Endothelial cell of umbilical vein (primary cell): ENCODE measurements at regions of chr17 and their contacts with region 1.

Region 1: DNA sequence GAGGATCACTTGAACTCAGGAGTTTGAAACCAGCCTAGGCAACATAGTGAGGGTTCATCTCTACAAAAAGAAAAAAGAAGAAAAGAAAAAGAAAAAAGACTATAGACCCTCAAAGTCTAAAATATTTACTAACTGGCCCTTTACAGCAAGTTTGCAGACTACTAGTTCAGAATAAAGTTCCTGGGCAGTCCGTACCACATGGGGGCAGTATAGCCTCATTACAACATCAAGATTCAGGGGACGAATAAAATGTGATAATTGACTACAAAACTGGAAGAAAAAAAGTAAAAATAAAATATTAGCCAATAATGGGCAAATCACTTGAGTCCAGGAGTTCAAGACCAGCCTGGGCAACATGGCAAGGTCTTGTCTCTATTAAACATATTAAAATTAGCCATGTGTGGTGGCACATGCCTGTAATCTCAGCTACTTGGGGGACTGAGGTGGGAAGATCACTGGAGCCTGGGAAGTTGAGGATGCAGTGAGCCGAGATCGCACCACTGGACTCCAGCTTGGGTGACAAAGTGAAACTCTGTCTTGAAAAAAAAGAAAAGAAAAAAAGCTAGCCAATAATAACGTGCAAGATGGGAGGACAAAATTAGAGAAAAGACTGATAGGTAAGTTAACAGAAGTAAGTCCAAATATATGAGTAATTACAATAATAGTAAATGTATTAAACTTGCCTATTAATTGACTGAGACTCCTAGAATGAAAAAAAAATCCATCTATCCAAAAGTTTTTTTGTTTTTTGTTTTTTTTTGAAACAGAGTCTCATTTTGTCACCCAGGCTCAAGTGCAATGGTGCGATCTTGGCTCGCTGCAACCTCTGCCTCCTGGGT is 129.4 kb upstream of the SEC14L1 start:
- DNase-seq: peak; percentile 53
- H3K4me3 ChIP-seq: no peak overlapping the region
- H3K27ac ChIP-seq: no peak overlapping the region
- H3K4me1 ChIP-seq: no peaks in the 10 kb centered on the region
- H3K27me3 ChIP-seq: peaks cover 3 to 6% of the 10 kb centered on the region in 2 experiments
- CTCF ChIP-seq: peak; percentile 50 to 56
- POLR2A ChIP-seq: no peak

Region 2: GRCh38 chr17:77068915-77069314 is 57.5 kb after region 1 on chr17:
- CTCF ChIA-PET with region 1: interaction called, 14 read pairs
- POLR2A ChIA-PET with region 1: interaction called, 3 read pairs
- dilution Hi-C with region 1: no loop called
- intact Hi-C with region 1: loop called (anchors 2 kb)
- DNase-seq: no peak
- H3K4me3 ChIP-seq: no peak overlapping the region
- H3K27ac ChIP-seq: no peak overlapping the region
- H3K4me1 ChIP-seq: no peaks in the 10 kb centered on the region
- H3K27me3 ChIP-seq: peaks cover 9% of the 10 kb centered on the region in 2 experiments
- CTCF ChIP-seq: no peak
- POLR2A ChIP-seq: no peak

Region 3: GRCh38 chr17:77247048-77247541 is 235.7 kb after region 1 on chr17:
- CTCF ChIA-PET with region 1: no interaction called
- POLR2A ChIA-PET with region 1: no interaction called
- dilution Hi-C with region 1: no loop called
- intact Hi-C with region 1: loop called (anchors 1 kb)
- DNase-seq: peak; percentile 63
- H3K4me3 ChIP-seq: peak overlapping the region in 2 of 3 experiments; percentile 16 to 62
- H3K27ac ChIP-seq: no peak overlapping the region
- H3K4me1 ChIP-seq: peaks cover 9% of the 10 kb centered on the region
- H3K27me3 ChIP-seq: no peaks in the 10 kb centered on the region
- CTCF ChIP-seq: peak; percentile 87 to 94
- POLR2A ChIP-seq: no peak